ENCODE measurements at regions of chr21 and their contacts with region 1.

Region 1: GRCh38 chr21:26389971-26390641 is 183.0 kb downstream of the CYYR1 start:
- DNase-seq: peak; percentile 100
- H3K4me3 ChIP-seq: no peak overlapping the region
- H3K27ac ChIP-seq: peak overlapping the region; percentile 79
- H3K4me1 ChIP-seq: peaks cover 47% of the 10 kb centered on the region
- H3K27me3 ChIP-seq: no peaks in the 10 kb centered on the region
- CTCF ChIP-seq: no peak

Region 2: GRCh38 chr21:26449161-26449560 is 59.1 kb after region 1 on chr21:
- CTCF ChIA-PET with region 1: no interaction called
- dilution Hi-C with region 1: no loop called
- in situ Hi-C with region 1: no loop called
- intact Hi-C with region 1: loop called (anchors 2 kb)
- DNase-seq: peak; percentile 87
- H3K4me3 ChIP-seq: peak overlapping the region in 2 of 3 experiments; percentile 8 to 19
- H3K27ac ChIP-seq: peak overlapping the region; percentile 78
- H3K4me1 ChIP-seq: peaks cover 23% of the 10 kb centered on the region
- H3K27me3 ChIP-seq: no peaks in the 10 kb centered on the region
- CTCF ChIP-seq: no peak

Region 3: DNA sequence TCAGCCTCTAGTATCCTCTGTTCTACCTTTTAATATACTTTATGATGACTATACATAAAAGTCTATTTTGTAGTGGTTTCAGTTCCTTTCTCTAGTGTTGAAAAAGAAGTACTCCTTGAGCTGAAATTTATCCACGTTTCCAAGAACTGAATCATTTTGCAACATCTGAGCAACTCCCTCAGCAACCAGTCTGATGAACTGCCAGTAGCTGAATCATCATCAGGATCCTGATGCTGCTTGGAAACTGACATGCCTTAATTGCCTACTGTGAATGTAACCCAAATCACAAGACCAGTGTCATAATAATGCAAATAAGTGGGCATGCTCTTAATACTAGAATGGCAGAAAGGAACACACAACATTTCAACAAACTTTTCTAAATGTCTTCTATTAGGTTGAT is 79.7 kb after region 1 on chr21:
- CTCF ChIA-PET with region 1: interaction called, 3 read pairs
- dilution Hi-C with region 1: no loop called
- in situ Hi-C with region 1: no loop called
- intact Hi-C with region 1: loop called (anchors 5 kb)
- DNase-seq: peak; percentile 81
- H3K4me3 ChIP-seq: no peak overlapping the region
- H3K27ac ChIP-seq: no peak overlapping the region
- H3K4me1 ChIP-seq: no peaks in the 10 kb centered on the region
- H3K27me3 ChIP-seq: no peaks in the 10 kb centered on the region
- CTCF ChIP-seq: no peak

Region 4: GRCh38 chr21:26572702-26573381 is 182.7 kb after region 1 on chr21 and contains the start of gene CYYR1:
- CTCF ChIA-PET with region 1: no interaction called
- dilution Hi-C with region 1: no loop called
- in situ Hi-C with region 1: no loop called
- intact Hi-C with region 1: loop called (anchors 5 kb)
- DNase-seq: peak; percentile 22
- H3K4me3 ChIP-seq: peak within 1 kb of the TSS; percentile 59 to 63 (median 60)
- H3K27ac ChIP-seq: no peak within 1 kb of the TSS
- H3K4me1 ChIP-seq: no peaks in the 10 kb centered on the region
- H3K27me3 ChIP-seq: no peaks in the 10 kb centered on the region
- CTCF ChIP-seq: no peak
- total RNA-seq, gene CYYR1: 3.0 to 5.2 TPM

Region 5: GRCh38 chr21:26715878-26716506 is 325.9 kb after region 1 on chr21:
- CTCF ChIA-PET with region 1: no interaction called
- dilution Hi-C with region 1: no loop called
- in situ Hi-C with region 1: no loop called
- intact Hi-C with region 1: loop called (anchors 2 kb)
- DNase-seq: peak; percentile 42
- H3K4me3 ChIP-seq: peak overlapping the region in 1 of 3 experiments; percentile 23
- H3K27ac ChIP-seq: no peak overlapping the region
- H3K4me1 ChIP-seq: peaks cover 4% of the 10 kb centered on the region
- H3K27me3 ChIP-seq: no peaks in the 10 kb centered on the region
- CTCF ChIP-seq: peak; percentile 85 to 86

Measured in mammary epithelial cell (primary cell).